PC-9 (cell line): ENCODE measurements at regions of chr1 and their contacts with region 1.

Region 1: GRCh38 chr1:205591522-205592351 is 40.1 kb downstream of the ELK4 start:
- DNase-seq: peak; percentile 65 to 86
- H3K4me3 ChIP-seq: peak overlapping the region; percentile 30; the same call in 1 of the 2 replicates
- H3K27ac ChIP-seq: no peak overlapping the region
- H3K4me1 ChIP-seq: peaks cover 11% of the 10 kb centered on the region
- H3K27me3 ChIP-seq: no peaks in the 10 kb centered on the region
- CTCF ChIP-seq: peak; percentile 95

Region 2: GRCh38 chr1:205190845-205191577 is 400.7 kb before region 1 on chr1:
- CTCF ChIA-PET with region 1: no interaction called
- POLR2A ChIA-PET with region 1: no interaction called
- intact Hi-C with region 1: no loop called
- DNase-seq: no peak
- H3K4me3 ChIP-seq: no peak overlapping the region
- H3K27ac ChIP-seq: no peak overlapping the region
- H3K4me1 ChIP-seq: peaks cover 8% of the 10 kb centered on the region; the same call in 1 of the 2 replicates
- H3K27me3 ChIP-seq: no peaks in the 10 kb centered on the region
- CTCF ChIP-seq: no peak

Region 3: DNA sequence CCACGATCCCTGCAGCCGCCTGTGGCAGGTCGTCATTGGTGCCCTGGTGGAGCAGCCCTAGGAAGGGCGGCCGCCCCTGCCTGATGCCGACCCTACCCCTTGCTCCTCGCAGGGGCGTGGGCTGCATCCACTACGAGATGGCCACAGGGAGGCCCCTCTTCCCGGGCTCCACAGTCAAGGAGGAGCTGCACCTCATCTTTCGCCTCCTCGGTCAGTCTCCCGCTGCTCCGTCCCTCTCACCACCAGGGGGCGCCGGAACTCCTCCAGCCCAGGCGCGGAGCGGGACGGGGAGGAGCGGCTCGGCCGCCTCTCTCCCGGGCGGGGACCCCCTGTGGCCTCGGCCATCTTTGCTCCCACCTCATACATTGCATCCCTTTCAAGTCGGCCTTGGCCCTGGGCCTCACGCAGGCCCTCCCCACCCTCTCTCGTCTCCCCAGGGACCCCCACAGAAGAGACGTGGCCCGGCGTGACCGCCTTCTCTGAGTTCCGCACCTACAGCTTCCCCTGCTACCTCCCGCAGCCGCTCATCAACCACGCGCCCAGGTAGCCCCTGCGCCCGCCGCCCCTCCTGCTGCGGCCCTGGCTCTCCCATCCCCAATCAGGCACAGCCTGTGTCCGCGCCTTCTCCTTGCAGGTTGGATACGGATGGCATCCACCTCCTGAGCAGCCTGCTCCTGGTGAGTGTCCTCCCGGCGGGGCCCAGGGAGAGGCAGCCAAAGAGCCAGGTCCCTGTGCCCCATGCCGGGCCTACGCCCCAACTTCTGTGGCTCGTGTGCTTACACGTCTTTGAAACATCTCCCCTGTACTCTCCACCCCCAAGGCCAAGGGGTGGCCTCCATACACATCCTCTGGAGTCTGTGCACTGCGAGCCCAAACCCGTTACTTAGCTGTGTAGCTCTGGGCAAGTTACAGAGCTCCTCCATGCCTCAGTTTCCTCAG is 62.6 kb before region 1 on chr1:
- CTCF ChIA-PET with region 1: interaction called, 3 read pairs
- POLR2A ChIA-PET with region 1: interaction called, 4 read pairs
- intact Hi-C with region 1: loop called (anchors 1 kb)
- DNase-seq: peak; percentile 46 to 77
- H3K4me3 ChIP-seq: no peak overlapping the region
- H3K27ac ChIP-seq: no peak overlapping the region
- H3K4me1 ChIP-seq: no peaks in the 10 kb centered on the region
- H3K27me3 ChIP-seq: no peaks in the 10 kb centered on the region
- CTCF ChIP-seq: peak; percentile 90

Region 4: GRCh38 chr1:205631727-205632373 is 40.1 kb after region 1 on chr1 and contains the start of gene ELK4:
- CTCF ChIA-PET with region 1: interaction called, 4 read pairs
- POLR2A ChIA-PET with region 1: interaction called, 11 read pairs
- intact Hi-C with region 1: loop called (anchors 1 kb)
- DNase-seq: peak; percentile 90 to 98
- H3K4me3 ChIP-seq: peak within 1 kb of the TSS; percentile 92
- H3K27ac ChIP-seq: peak within 1 kb of the TSS; percentile 84
- H3K4me1 ChIP-seq: peaks cover 22% of the 10 kb centered on the region
- H3K27me3 ChIP-seq: no peaks in the 10 kb centered on the region
- CTCF ChIP-seq: peak; percentile 63
- total RNA-seq, gene ELK4: 40.3 and 48.1 TPM in 2 replicates

Region 5: DNA sequence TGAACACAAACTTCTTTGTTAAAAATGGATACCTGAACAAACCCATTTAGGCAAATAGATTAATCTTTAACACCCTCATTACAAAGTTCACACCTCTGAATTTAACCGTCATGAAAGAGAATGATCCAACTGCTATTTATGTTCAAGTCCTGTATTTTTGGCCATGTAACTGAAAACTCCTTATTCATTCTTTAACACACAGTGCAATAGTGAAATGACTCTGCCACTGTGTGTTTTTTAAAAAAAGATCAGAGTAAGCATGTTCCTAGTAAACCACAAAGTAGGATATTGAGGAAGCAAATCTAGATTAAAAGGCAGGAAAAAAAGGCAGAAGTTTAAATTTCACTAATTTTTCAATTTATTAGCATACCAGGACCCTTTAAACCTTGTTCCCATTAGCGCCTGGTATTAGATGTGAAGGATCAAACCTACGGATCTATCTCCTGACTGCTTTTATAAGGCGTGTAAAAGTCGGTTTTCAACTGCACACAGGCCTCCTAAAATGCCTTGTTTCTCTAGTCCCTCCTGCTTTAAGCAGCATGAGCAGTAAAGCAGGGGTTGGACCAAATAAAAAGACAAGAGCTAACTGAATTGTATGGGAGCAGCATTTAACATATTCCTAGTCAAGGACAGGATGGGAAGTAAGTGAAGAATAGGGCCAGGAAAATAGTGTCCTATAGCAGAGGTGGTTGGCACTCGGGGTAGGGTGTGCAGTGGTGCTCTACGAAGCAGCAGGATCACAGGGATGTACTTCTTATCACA is 124.8 kb after region 1 on chr1:
- CTCF ChIA-PET with region 1: interaction called, 3 read pairs
- POLR2A ChIA-PET with region 1: interaction called, 30 read pairs
- intact Hi-C with region 1: loop called (anchors 2 kb)
- DNase-seq: no peak
- H3K4me3 ChIP-seq: no peak overlapping the region
- H3K27ac ChIP-seq: no peak overlapping the region
- H3K4me1 ChIP-seq: no peaks in the 10 kb centered on the region
- H3K27me3 ChIP-seq: no peaks in the 10 kb centered on the region
- CTCF ChIP-seq: no peak

Region 6: DNA sequence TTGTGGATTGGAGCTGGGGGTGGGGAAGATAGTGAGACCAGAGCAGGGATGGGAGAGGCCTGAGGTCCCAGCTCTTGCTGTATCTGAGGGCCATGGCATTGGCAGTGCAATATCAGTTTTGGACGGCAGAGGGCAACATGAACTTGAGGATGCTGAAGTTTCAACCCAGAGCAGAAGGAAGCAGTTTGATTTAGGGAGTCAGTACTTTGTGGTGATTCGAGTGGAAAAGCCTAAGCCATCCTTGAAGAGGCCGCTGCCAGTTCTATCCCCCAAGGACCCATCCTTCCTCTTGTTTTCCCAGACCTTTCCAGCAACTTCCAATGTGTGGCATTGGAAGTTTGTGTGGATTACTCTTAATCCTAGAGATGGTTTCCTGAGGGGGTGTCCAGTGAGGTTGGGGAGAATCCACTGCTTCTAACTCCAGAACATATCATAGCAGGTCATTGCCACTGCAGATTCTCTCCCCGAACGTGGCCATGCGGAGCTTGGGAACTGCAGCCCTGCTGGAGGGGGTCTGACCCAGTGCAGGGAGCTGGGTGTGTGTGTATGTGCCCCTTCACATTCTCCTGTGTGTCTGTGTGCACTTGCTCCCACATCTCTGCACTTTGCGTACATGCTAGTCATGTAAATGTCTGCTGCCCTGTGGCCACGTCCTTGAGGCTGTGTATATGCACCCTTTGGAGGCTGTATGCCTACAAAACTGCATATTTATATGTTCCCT is 327.4 kb after region 1 on chr1:
- CTCF ChIA-PET with region 1: no interaction called
- POLR2A ChIA-PET with region 1: no interaction called
- intact Hi-C with region 1: loop called (anchors 10 kb)
- DNase-seq: peak; percentile 66 to 76
- H3K4me3 ChIP-seq: no peak overlapping the region
- H3K27ac ChIP-seq: no peak overlapping the region
- H3K4me1 ChIP-seq: no peaks in the 10 kb centered on the region
- H3K27me3 ChIP-seq: no peaks in the 10 kb centered on the region
- CTCF ChIP-seq: peak; percentile 97